Activated CD4-positive, alpha-beta T cell treated with anti-CD3 and anti-CD28 coated beads, Interleukin-2, amount 10 ng/mL, durations not matched to agents 7 days and 5 days (primary cell): ENCODE measurements at regions of chr20 and their contacts with region 1.

Region 1: GRCh38 chr20:35523298-35523888 is 6.1 kb downstream of the C20orf173 start:
- DNase-seq: peak; percentile 44
- H3K4me3 Mint-ChIP-seq: no peak overlapping the region
- H3K27ac Mint-ChIP-seq: no peak overlapping the region
- H3K4me1 Mint-ChIP-seq: no peaks in the 10 kb centered on the region
- H3K27me3 Mint-ChIP-seq: no peaks in the 10 kb centered on the region

Region 2: DNA sequence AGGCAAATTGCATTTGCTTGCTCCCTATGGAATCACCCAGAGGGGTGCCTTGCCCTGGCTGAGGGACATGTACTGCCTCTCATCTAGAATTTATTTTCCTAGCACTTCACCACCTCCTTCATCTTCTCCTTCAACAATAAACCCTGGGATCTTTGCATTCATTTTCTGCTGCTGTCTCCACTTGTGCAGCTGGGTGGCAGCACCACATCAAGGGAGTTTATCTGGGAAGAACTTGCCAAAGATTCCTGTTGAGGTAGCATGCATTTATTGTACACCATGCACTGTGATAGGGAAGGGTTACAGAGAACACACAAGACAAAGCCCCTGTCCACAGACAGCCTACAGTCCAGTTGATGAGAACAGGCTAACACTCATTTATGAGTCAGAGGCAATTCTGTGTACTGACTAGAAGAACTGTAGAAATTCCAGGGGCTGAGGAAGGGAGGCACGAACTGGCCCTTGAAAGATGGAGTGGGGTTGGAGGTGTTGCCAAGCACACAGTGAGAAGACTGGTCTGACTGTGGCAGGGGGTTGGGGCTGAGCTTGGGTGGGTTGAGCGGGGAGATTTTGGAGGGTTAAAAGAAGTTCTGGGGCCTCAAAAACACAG is 11.5 kb before region 1 on chr20:
- CTCF ChIA-PET with region 1: no interaction called
- POLR2A ChIA-PET with region 1: no interaction called
- DNase-seq: no peak
- H3K4me3 Mint-ChIP-seq: no peak overlapping the region
- H3K27ac Mint-ChIP-seq: peak overlapping the region; percentile 33
- H3K4me1 Mint-ChIP-seq: peaks cover 2% of the 10 kb centered on the region
- H3K27me3 Mint-ChIP-seq: no peaks in the 10 kb centered on the region

Region 3: GRCh38 chr20:35680452-35681183 is 157.2 kb after region 1 on chr20:
- CTCF ChIA-PET with region 1: no interaction called
- POLR2A ChIA-PET with region 1: interaction called, 11 read pairs
- DNase-seq: no peak
- H3K4me3 Mint-ChIP-seq: no peak overlapping the region
- H3K27ac Mint-ChIP-seq: peak overlapping the region; percentile 74
- H3K4me1 Mint-ChIP-seq: peaks cover 4% of the 10 kb centered on the region
- H3K27me3 Mint-ChIP-seq: no peaks in the 10 kb centered on the region

Region 4: GRCh38 chr20:35968931-35969330 is 445.5 kb after region 1 on chr20:
- CTCF ChIA-PET with region 1: no interaction called
- POLR2A ChIA-PET with region 1: no interaction called
- DNase-seq: no peak
- H3K4me3 Mint-ChIP-seq: no peak overlapping the region
- H3K27ac Mint-ChIP-seq: no peak overlapping the region
- H3K4me1 Mint-ChIP-seq: peaks cover 4% of the 10 kb centered on the region
- H3K27me3 Mint-ChIP-seq: peaks cover 2% of the 10 kb centered on the region